CD4-positive, alpha-beta T cell (primary cell): ENCODE measurements at regions of chr13 and their contacts with region 1.

Region 1: DNA sequence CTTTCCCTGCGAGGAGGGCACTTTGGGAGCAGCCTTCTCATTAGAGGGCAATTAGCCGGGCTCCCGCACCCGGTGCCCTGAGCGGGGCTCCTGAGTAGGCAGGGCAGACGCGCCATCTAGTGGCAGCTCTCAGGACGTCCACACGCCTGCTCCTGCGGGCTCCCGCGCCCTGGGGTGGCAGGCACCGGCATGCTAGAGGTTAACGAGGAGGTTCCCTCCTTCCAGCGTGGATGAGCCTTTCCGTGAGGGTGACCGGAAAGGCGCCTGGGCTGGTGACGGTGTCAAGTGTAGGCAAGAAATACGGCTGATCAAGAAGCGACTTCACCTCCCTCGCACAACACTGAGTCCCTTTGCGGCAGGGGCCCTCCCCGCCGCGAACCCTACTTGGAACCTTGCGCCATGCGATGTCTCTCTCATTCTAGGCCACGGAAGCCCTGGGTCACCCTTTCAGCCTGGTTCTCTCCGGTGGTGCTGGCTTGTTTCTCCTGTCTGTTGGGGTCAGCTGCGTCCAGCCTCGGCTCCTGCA is 67.7 kb downstream of the ALOX5AP start:
- DNase-seq: peak; percentile 60 to 89 (median 74)
- ATAC-seq: peak; percentile 98
- H3K4me3 ChIP-seq: peak overlapping the region; percentile 23
- H3K4me3 Mint-ChIP-seq: peak overlapping the region; percentile 55
- H3K27ac ChIP-seq: no peak overlapping the region
- H3K27ac Mint-ChIP-seq: no peak overlapping the region
- H3K4me1 ChIP-seq: peaks cover 8% of the 10 kb centered on the region
- H3K4me1 Mint-ChIP-seq: peaks cover 7% of the 10 kb centered on the region
- H3K27me3 ChIP-seq: no peaks in the 10 kb centered on the region
- H3K27me3 Mint-ChIP-seq: no peaks in the 10 kb centered on the region
- CTCF ChIP-seq: peak; percentile 94

Region 2: DNA sequence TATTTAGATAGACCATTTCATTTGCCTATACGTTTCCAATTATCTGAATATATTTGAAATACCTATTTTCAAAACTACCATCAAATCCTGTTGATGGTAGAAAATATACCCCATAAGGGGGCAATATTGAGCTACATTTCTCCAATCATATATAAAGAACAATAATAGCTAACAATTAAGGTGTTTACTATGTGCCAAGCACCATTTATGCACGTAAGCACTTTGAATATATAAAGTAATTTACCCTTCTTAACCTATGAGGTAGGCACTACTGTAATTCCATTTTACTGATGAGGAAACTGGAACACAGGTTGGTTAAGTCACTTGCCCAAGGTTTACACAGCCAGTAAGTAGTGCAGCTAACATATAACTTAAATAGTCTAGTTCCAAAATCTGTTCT is 1031.8 kb before region 1 on chr13:
- CTCF ChIA-PET with region 1: no interaction called
- POLR2A ChIA-PET with region 1: no interaction called
- intact Hi-C with region 1: loop called (anchors 5 to 10 kb)
- DNase-seq: peak in 3 of 14 experiments; percentile 64 to 69 (median 67)
- ATAC-seq: peak; percentile 75
- H3K4me3 ChIP-seq: no peak overlapping the region
- H3K4me3 Mint-ChIP-seq: no peak overlapping the region
- H3K27ac ChIP-seq: no peak overlapping the region
- H3K27ac Mint-ChIP-seq: no peak overlapping the region
- H3K4me1 ChIP-seq: no peaks in the 10 kb centered on the region
- H3K4me1 Mint-ChIP-seq: peaks cover 8% of the 10 kb centered on the region
- H3K27me3 ChIP-seq: no peaks in the 10 kb centered on the region
- H3K27me3 Mint-ChIP-seq: no peaks in the 10 kb centered on the region
- CTCF ChIP-seq: peak; percentile 78

Region 3: DNA sequence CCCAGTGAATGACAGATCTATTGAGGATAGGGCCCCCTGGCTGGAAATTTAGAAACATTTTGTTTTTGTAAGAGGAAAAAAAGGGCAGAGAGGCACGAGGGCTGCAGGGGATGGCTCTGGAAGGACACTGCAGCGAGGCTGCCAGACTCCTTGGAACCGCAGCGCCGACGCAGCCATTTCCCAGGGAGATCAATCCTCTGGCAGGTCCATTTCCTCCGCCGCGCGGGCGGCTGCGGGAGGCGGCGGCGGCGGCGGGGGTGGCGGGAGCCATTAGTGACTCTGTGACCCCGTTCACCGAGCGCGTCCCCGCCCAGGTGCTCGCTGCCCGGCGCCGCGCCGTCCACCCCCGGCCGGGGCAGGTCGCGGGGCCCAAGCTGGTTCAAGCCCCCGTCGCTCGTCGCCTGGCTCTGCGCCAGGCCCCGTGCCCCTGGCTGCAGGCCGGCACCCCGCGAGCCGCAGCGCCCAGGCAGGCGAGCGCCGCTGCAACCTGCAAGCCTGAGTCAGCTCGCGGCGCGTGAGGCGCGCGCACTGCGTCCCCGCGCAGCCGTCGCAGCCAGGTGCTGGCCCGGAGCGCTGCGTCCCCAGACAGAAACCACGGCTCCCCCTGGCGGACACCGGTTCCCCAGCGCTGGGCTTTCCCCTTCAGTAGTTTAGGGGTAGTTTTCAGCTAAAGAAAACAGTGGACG is 688.3 kb before region 1 on chr13:
- CTCF ChIA-PET with region 1: no interaction called
- POLR2A ChIA-PET with region 1: no interaction called
- intact Hi-C with region 1: loop called in 1 of 2 experiments (anchors 5 kb)
- DNase-seq: peak; percentile 85 to 97 (median 95)
- ATAC-seq: peak; percentile 88
- H3K4me3 ChIP-seq: peak overlapping the region; percentile 53
- H3K4me3 Mint-ChIP-seq: peak overlapping the region; percentile 91
- H3K27ac ChIP-seq: no peak overlapping the region
- H3K27ac Mint-ChIP-seq: peak overlapping the region; percentile 78
- H3K4me1 ChIP-seq: peaks cover 29% of the 10 kb centered on the region
- H3K4me1 Mint-ChIP-seq: peaks cover 44% of the 10 kb centered on the region
- H3K27me3 ChIP-seq: no peaks in the 10 kb centered on the region
- H3K27me3 Mint-ChIP-seq: no peaks in the 10 kb centered on the region
- CTCF ChIP-seq: peak; percentile 86

Region 4: DNA sequence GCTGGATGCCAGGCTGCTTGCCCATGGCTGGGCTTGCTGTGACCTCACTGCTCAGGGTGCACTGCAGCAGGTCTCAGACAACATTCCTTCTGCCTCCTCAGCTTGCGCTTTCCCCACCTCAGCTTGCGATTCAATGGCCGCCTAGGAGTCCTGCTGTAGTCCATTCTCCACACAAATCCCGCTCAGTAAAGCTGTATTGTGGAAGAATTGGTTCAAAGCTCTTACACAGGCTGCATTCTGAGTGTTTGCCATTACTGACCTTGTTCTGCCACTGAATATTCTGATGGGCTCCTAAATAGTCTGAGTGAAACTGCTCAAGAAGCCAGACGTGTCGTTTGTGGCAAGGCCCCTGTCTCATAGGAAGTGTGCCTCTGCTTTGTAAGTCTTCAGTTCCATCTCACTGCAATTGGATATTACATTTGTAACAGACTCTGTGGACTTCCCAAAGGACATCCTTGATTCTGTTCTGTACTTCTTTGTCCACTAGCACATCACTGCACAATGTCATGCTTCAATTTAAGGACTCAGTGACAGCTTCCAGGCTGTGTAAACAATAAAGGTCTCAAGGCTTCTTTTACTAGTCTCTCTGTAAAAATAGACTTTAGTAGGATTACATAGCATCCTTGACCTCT is 545.4 kb before region 1 on chr13:
- CTCF ChIA-PET with region 1: no interaction called
- POLR2A ChIA-PET with region 1: no interaction called
- intact Hi-C with region 1: loop called in 1 of 2 experiments (anchors 5 kb)
- DNase-seq: no peak
- ATAC-seq: no peak
- H3K4me3 ChIP-seq: no peak overlapping the region
- H3K4me3 Mint-ChIP-seq: no peak overlapping the region
- H3K27ac ChIP-seq: no peak overlapping the region
- H3K27ac Mint-ChIP-seq: no peak overlapping the region
- H3K4me1 ChIP-seq: peaks cover 3% of the 10 kb centered on the region
- H3K4me1 Mint-ChIP-seq: peaks cover 17% of the 10 kb centered on the region
- H3K27me3 ChIP-seq: no peaks in the 10 kb centered on the region
- H3K27me3 Mint-ChIP-seq: no peaks in the 10 kb centered on the region
- CTCF ChIP-seq: no peak

Region 5: DNA sequence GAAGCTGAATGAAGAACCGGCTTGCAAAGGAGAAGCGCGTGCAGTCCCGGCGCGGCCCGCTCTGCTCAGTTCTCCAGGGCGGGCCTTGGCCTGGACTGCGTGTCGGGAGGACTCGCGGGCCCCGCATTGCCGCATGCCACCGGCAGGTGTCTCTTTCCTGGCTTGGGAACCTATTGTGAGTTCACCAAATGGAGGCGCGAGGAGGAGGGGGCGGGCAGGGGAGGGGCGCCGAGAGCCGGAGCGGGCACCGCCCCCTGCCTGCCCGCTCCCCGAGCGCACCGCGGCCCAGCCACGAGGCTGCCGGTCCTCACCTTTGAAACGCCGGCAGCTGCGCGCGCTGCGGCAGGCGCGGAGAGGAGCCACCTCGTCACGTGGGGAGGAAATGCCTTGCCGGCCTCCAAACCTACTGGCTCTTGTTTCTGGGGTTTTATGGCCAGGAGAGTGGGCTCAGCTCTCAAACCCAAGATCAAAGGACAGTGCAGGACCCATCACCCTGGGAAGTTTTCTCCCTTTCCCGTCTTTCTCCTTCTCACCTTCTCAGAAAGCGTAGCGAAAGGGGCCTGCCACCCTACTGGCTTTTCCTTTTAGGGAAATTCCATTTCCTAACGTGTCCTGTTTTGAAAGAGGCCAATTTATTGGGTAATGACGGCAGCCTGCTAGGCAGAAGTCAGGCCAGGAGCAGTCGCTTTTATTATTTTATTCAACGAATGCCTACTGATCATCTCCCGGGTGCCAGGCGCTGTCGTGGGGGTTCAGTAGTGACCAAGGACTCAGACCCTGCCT is 394.5 kb before region 1 on chr13:
- CTCF ChIA-PET with region 1: interaction called, 3 read pairs
- POLR2A ChIA-PET with region 1: no interaction called
- intact Hi-C with region 1: loop called (anchors 5 kb)
- DNase-seq: peak; percentile 83 to 96 (median 88)
- ATAC-seq: peak; percentile 91
- H3K4me3 ChIP-seq: peak overlapping the region; percentile 37
- H3K4me3 Mint-ChIP-seq: peak overlapping the region; percentile 76
- H3K27ac ChIP-seq: peak overlapping the region in 1 of 2 donors; percentile 76
- H3K27ac Mint-ChIP-seq: peak overlapping the region; percentile 78
- H3K4me1 ChIP-seq: peaks cover 20% of the 10 kb centered on the region
- H3K4me1 Mint-ChIP-seq: peaks cover 40% of the 10 kb centered on the region
- H3K27me3 ChIP-seq: no peaks in the 10 kb centered on the region
- H3K27me3 Mint-ChIP-seq: no peaks in the 10 kb centered on the region
- CTCF ChIP-seq: peak; percentile 63

Region 6: DNA sequence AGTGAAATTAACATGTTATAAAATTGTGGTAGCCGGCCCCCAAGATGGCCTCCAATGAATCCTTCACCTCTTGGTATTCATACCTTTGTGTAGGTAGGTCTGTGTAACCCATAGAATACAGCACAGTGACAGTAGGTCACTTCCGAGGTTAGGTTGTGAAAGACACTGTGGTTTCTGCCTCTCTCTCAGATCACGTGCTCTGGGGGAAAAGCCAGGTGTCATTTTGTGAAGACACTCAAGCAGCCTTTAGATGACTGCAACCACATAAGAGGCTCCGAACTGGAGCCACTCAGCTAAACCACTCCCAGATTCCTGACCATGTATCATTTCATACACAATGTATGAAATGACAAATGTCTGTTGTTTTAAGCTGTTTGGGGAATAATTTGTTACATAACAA is 195.1 kb before region 1 on chr13:
- CTCF ChIA-PET with region 1: no interaction called
- POLR2A ChIA-PET with region 1: no interaction called
- intact Hi-C with region 1: no loop called
- DNase-seq: peak; percentile 34 to 93 (median 50)
- ATAC-seq: peak; percentile 98
- H3K4me3 ChIP-seq: no peak overlapping the region
- H3K4me3 Mint-ChIP-seq: peak overlapping the region; percentile 54
- H3K27ac ChIP-seq: peak overlapping the region in 1 of 2 donors; percentile 25
- H3K27ac Mint-ChIP-seq: peak overlapping the region; percentile 92
- H3K4me1 ChIP-seq: peaks cover 14% of the 10 kb centered on the region
- H3K4me1 Mint-ChIP-seq: peaks cover 50% of the 10 kb centered on the region
- H3K27me3 ChIP-seq: no peaks in the 10 kb centered on the region
- H3K27me3 Mint-ChIP-seq: no peaks in the 10 kb centered on the region
- CTCF ChIP-seq: no peak

Region 7: DNA sequence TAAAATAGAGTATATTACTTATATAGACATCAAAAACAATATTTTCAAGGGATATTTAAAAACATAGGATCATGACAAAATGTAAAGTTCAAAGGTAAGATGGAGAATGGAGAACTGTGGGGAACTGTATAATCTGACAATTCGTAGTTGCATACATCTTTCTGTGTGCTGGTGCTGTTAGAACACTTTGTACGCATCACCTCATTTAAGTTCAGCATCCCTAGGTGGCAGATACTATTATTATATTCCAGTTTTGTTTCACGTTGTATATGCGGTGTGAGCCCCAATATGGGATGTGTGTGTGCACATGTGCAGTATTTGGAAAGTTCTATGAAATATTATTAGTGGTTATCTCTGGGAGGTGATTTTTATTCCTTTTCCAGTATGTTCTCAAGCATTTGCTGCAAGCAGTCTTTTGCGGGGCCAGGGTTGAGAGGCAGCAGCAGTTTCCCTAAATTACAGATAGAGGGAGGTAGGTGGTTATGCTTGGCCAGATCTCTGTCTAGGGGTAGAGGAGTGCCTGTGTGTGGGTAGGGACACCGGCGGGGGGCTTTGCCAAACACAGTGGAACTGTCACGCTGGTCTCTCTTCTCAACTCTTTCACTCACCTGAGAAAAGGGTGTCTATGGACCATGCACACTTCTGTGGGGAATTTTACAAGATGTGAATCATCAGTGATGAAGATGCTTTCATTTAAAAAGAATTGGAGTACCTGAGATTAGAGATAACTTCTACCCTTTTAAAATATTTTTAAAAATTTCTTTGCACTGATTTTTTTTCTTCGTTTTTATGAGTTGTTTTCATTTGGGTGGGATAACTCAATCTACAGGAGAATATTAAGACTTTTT is 123.3 kb before region 1 on chr13:
- CTCF ChIA-PET with region 1: interaction called, 3 read pairs
- POLR2A ChIA-PET with region 1: no interaction called
- intact Hi-C with region 1: loop called (anchors 1 kb)
- DNase-seq: peak in 11 of 14 experiments; percentile 5 to 67 (median 26)
- ATAC-seq: peak; percentile 91
- H3K4me3 ChIP-seq: no peak overlapping the region
- H3K4me3 Mint-ChIP-seq: no peak overlapping the region
- H3K27ac ChIP-seq: no peak overlapping the region
- H3K27ac Mint-ChIP-seq: no peak overlapping the region
- H3K4me1 ChIP-seq: peaks cover 5% of the 10 kb centered on the region
- H3K4me1 Mint-ChIP-seq: peaks cover 12% of the 10 kb centered on the region
- H3K27me3 ChIP-seq: no peaks in the 10 kb centered on the region
- H3K27me3 Mint-ChIP-seq: no peaks in the 10 kb centered on the region
- CTCF ChIP-seq: peak; percentile 53

Region 8: DNA sequence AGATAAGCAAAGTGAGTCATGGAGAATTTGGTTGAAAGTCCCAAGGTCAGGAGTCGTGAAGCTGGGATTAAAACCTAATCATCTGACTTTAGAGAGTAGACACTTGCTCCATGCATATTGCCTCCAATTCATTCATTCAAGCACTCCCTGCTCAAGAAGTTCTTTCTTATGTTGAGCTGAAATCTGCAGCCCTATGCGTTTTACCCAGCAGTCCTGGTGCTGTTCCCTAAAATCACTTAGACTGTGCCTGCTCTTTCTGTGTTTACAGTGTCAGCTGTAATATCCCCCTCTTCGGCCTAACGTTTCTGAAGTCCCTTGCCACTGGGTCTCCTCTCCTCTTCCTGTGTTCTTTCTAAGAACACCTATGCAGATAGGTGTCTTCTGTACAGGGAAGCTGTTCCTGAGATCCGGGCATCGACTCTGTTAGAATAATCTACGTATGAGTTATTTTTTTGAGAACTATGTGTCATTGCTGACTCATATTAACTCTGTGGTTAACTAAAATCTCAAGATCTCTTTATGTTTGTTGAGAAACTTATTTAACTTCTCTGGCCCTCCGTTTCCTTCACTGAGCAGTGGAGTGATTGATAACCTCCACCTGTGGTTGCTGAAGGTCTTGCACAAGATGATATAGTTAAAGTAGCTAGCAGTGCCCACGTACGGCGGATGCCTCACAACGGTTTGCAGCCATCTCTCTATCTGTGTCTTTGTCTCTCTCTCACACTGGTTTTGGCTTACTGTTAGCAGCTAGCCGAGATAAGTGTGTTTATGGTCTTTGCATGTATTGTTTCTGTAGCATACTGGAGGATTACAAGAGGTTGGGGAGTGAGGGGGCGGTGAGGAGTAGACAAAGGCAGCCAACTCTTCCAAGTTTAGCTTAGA is 63.0 kb before region 1 on chr13:
- CTCF ChIA-PET with region 1: interaction called, 3 read pairs
- POLR2A ChIA-PET with region 1: no interaction called
- intact Hi-C with region 1: loop called in 1 of 2 experiments (anchors 5 kb)
- DNase-seq: peak; percentile 15 to 81 (median 54)
- ATAC-seq: peak; percentile 55
- H3K4me3 ChIP-seq: peak overlapping the region; percentile 42
- H3K4me3 Mint-ChIP-seq: peak overlapping the region; percentile 83
- H3K27ac ChIP-seq: peak overlapping the region; percentile 31 to 52
- H3K27ac Mint-ChIP-seq: peak overlapping the region; percentile 82
- H3K4me1 ChIP-seq: peaks cover 92% of the 10 kb centered on the region
- H3K4me1 Mint-ChIP-seq: peaks cover 80% of the 10 kb centered on the region
- H3K27me3 ChIP-seq: no peaks in the 10 kb centered on the region
- H3K27me3 Mint-ChIP-seq: no peaks in the 10 kb centered on the region
- CTCF ChIP-seq: no peak

Region 9: DNA sequence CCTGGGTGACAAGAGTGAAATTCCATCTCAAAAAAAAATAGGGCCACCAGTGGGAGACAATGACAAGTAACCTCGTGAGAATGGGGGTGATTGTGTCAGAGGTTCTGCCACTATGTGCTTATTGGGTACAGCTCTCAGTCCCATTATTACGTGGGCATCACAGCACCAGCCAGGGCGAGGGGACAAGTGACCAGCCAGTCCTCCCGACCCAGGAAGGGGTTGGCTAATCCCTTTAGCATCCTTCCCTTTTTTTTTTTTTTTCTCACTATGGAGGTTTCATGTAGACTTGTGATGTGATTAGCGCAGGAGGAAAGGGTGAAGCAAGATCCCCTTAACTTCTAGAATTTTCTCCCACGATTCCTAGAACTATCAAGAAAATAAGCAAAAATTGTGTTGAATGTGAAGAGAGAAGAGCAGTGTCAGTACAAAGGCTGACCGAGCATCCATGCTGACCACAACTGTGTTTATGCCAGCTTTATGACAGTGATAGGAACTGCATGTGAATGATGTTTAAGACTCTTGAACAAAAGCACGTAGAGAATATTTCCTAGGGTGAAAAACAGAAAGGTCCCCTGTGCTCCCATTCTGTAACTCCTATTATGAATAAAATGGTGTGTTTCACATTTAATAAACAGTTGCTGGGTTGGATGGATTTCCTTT is 17.7 kb before region 1 on chr13:
- CTCF ChIA-PET with region 1: no interaction called
- POLR2A ChIA-PET with region 1: no interaction called
- intact Hi-C with region 1: no loop called
- DNase-seq: peak in 2 of 14 experiments; percentile 54 to 66
- ATAC-seq: no peak
- H3K4me3 ChIP-seq: no peak overlapping the region
- H3K4me3 Mint-ChIP-seq: no peak overlapping the region
- H3K27ac ChIP-seq: no peak overlapping the region
- H3K27ac Mint-ChIP-seq: no peak overlapping the region
- H3K4me1 ChIP-seq: no peaks in the 10 kb centered on the region
- H3K4me1 Mint-ChIP-seq: no peaks in the 10 kb centered on the region
- H3K27me3 ChIP-seq: no peaks in the 10 kb centered on the region
- H3K27me3 Mint-ChIP-seq: no peaks in the 10 kb centered on the region
- CTCF ChIP-seq: no peak